Activated naive CD4-positive, alpha-beta T cell treated with anti-CD3 and anti-CD28 coated beads for 36 hours (primary cell): ENCODE measurements at regions of chr13 and their contacts with region 1.

Region 1: DNA sequence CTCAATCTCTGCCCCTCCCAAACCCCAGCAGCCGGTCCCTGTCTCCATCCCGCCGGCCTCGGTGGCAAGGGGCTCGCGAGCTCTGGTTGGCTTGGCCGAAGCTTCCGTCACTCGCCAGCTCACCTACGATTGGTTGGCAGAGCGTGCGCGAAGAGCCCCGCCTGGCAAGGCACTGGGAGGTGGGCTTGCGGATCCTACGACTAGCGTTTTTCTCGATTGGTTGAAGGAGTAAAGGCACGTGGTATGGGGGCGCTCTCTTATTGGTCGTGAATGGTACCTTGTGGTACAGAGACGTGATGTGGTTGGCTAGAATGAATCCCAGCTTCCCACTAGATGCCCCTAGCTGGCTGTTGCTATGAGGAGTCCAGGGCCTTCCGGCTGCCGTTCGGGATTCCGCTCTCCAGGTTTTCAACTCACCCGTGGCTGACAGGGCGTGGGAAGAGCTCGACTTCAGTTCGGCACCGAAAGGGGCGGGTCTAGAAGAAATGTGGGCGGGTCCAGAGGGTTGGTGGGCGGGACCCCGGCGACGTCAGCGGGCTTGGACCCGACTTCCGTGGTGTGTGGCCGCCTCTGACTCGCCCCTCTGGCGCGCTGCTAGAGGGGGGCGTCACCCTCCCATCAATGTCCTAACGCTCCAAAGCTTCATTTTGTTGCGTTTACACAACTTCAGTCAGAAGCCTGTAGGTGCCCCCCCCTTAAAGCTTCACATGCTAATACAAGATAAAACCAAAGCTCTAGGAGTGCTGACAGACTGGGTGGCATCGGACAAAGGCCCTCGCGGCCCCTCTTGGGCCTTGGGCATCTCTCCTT is 847 bp upstream of the RAP2A start:
- DNase-seq: peak; percentile 98
- H3K4me3 Mint-ChIP-seq: peak overlapping the region; percentile 86
- H3K27ac Mint-ChIP-seq: peak overlapping the region; percentile 95
- H3K4me1 Mint-ChIP-seq: peaks cover 22% of the 10 kb centered on the region
- H3K27me3 Mint-ChIP-seq: no peaks in the 10 kb centered on the region

Region 2: DNA sequence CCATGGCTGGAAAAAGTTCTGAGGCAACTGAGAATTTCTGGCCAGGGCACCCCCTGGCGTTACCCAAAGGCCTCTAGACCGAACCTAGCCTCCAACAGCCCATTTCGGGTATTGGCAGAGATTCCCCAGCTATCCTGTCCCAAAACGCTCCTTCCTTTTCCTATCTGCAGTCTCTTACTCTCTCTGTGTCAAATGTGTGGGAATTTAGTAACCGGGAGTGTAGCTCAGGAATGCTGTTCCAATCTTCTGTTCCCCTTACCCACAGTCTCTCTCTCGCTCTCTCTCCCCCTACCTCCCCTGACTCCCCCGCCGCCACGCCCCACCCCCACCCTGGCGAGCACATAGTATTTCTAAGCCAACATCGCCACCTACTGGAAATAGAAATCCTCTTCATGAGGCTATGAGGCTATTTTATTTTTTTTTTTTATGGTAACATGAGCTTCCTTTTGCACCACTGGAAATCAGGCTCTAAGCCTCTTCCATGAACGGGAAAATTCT is 465.8 kb before region 1 on chr13:
- CTCF ChIA-PET with region 1: no interaction called
- intact Hi-C with region 1: no loop called
- DNase-seq: no peak
- H3K4me3 Mint-ChIP-seq: no peak overlapping the region
- H3K27ac Mint-ChIP-seq: no peak overlapping the region
- H3K4me1 Mint-ChIP-seq: no peaks in the 10 kb centered on the region
- H3K27me3 Mint-ChIP-seq: no peaks in the 10 kb centered on the region

Region 3: GRCh38 chr13:97124916-97125809 is 308.0 kb before region 1 on chr13:
- CTCF ChIA-PET with region 1: no interaction called
- intact Hi-C with region 1: loop called (anchors 1 kb)
- DNase-seq: peak; percentile 44
- H3K4me3 Mint-ChIP-seq: no peak overlapping the region
- H3K27ac Mint-ChIP-seq: no peak overlapping the region
- H3K4me1 Mint-ChIP-seq: peaks cover 18% of the 10 kb centered on the region
- H3K27me3 Mint-ChIP-seq: peaks cover 24% of the 10 kb centered on the region

Region 4: GRCh38 chr13:97295283-97296182 is 137.6 kb before region 1 on chr13:
- CTCF ChIA-PET with region 1: no interaction called
- intact Hi-C with region 1: loop called (anchors 1 kb)
- DNase-seq: no peak
- H3K4me3 Mint-ChIP-seq: no peak overlapping the region
- H3K27ac Mint-ChIP-seq: no peak overlapping the region
- H3K4me1 Mint-ChIP-seq: peaks cover 31% of the 10 kb centered on the region
- H3K27me3 Mint-ChIP-seq: no peaks in the 10 kb centered on the region

Region 5: DNA sequence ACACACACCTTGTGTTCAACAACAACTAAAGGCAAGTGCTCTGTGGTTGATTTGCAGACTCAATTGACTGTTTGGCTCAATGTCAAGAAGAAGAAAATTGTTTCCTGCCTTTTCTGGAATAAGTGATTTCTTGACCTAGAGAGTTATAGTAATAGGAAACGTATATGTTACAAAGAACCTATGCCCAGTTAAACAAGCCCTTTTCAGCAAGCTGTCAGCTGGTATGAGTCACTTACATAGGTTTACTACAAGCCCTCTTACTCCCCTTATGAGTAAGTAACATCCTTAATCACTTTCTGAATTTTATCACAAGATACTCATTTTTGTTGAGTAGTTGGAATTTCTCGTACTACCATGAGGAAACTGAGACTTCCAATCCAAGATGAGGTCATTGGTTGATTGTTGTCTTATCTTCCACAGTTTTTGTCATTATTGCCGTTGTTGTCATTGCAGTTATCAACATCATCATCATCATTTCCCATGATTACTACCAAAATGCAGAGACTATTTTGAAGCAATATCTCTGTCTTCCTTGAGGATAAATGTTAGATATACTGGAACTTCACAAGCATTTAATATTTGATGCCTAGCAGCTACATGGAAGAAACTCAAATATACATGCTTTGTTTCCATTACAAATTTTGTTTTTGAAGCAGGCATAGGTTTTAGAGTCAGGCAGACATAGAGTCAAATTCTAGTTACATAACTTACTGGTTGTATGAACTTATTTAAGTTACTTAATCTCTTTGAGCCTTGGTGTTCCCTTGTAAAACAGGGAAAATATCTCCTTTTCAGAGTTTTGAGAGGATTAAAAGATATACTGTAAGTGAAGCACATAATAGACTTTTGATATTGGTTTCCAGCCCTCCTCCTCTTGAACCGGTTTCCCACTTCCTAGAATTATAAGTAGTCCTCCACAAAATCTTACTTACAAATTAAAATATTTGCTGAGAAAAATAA is 106.8 kb after region 1 on chr13:
- CTCF ChIA-PET with region 1: no interaction called
- intact Hi-C with region 1: loop called (anchors 1 kb)
- DNase-seq: no peak
- H3K4me3 Mint-ChIP-seq: no peak overlapping the region
- H3K27ac Mint-ChIP-seq: no peak overlapping the region
- H3K4me1 Mint-ChIP-seq: peaks cover 4% of the 10 kb centered on the region
- H3K27me3 Mint-ChIP-seq: peaks cover 4% of the 10 kb centered on the region

Region 6: DNA sequence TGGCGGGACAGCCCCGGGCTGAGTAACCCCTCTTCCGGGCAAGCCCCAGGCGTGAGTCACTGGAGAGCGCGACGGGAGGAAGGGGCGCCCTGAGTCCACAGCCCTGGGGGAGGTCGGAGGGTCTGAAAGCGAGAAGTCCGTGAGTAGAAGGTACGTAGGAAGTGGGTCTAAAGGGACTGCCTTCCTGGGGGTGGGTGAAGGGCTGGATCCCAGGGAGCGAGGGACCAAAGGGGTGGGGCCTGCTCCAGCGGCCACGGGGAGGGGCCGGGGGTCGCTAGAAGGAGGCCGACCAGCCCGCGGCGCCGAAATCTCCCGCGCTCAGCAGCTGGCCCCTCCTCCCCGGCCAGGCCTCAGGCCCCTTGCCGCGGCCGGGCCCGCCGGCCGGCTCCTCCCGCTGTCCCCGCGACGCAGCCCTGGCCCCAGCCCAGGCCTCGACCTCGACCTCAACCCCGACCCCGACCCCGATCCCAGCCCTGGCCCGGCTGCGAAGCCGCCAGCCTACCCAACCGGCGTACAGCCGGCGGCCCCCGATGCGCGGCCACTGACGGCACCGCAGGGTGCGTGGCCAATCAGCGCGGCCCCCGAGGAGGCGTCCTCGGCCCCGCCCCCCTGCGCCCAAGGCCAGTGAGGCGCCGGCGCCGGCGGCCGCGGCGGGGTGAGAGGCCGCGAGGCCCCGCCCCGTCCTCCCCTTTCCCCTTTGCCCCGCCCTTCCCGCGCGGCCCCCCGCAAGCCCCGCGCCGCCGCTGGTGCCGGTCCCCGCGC is 542.9 kb after region 1 on chr13:
- CTCF ChIA-PET with region 1: no interaction called
- intact Hi-C with region 1: loop called (anchors 1 kb)
- DNase-seq: peak; percentile 89
- H3K4me3 Mint-ChIP-seq: peak overlapping the region; percentile 92
- H3K27ac Mint-ChIP-seq: peak overlapping the region; percentile 97
- H3K4me1 Mint-ChIP-seq: peaks cover 28% of the 10 kb centered on the region
- H3K27me3 Mint-ChIP-seq: no peaks in the 10 kb centered on the region